ENCODE measurements at regions of chr1 and their contacts with region 1.

Region 1: GRCh38 chr1:111481387-111482221 is 7.8 kb downstream of the C1orf162 start:
- DNase-seq: peak; percentile 64
- H3K4me3 Mint-ChIP-seq: no peak overlapping the region
- H3K27ac Mint-ChIP-seq: no peak overlapping the region
- H3K4me1 Mint-ChIP-seq: no peaks in the 10 kb centered on the region
- H3K27me3 Mint-ChIP-seq: no peaks in the 10 kb centered on the region
- CTCF ChIP-seq: peak; percentile 58

Region 2: DNA sequence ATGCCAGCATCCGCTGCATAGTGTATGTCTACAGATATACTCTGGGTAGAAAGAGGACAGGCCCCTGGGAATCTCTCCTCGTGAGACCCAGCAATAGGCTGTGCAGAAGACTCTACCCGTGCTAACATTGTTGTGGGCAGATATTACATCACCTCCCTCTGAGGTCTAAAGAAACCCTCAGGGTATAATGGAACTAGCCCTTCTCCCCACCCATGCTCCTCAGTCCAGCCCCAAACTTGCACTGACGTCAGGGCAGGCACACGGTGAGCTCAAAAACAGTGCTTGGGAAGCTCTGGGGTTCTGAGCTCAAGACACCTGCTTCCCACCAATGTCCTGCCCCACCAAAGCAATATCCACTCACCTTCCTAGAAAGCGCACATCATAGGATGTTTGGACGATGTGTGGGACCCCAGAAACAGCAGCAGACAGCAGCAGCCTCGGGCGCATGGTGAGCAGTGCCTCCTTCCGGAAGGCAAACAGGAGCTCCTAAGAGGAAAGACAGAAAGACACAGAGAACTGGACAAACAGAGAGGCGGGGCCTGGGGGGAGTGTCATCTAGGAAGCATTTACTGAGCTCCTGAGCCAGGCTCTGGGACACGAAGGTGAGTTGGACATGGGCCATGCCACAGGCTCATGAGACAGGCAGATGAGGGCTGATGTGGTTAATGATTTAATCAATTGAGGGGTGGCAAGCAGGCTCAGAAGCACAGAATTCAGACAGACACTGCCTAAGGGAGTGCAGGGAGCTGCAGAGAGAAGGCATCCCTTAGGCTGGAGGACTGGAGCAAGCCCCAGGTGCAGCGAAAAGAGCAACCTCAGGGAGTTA is 58.8 kb before region 1 on chr1:
- CTCF ChIA-PET with region 1: no interaction called
- POLR2A ChIA-PET with region 1: no interaction called
- intact Hi-C with region 1: no loop called
- DNase-seq: peak; percentile 81
- H3K4me3 Mint-ChIP-seq: peak overlapping the region; percentile 59
- H3K27ac Mint-ChIP-seq: peak overlapping the region; percentile 58
- H3K4me1 Mint-ChIP-seq: peaks cover 23% of the 10 kb centered on the region
- H3K27me3 Mint-ChIP-seq: no peaks in the 10 kb centered on the region
- CTCF ChIP-seq: no peak

Region 3: DNA sequence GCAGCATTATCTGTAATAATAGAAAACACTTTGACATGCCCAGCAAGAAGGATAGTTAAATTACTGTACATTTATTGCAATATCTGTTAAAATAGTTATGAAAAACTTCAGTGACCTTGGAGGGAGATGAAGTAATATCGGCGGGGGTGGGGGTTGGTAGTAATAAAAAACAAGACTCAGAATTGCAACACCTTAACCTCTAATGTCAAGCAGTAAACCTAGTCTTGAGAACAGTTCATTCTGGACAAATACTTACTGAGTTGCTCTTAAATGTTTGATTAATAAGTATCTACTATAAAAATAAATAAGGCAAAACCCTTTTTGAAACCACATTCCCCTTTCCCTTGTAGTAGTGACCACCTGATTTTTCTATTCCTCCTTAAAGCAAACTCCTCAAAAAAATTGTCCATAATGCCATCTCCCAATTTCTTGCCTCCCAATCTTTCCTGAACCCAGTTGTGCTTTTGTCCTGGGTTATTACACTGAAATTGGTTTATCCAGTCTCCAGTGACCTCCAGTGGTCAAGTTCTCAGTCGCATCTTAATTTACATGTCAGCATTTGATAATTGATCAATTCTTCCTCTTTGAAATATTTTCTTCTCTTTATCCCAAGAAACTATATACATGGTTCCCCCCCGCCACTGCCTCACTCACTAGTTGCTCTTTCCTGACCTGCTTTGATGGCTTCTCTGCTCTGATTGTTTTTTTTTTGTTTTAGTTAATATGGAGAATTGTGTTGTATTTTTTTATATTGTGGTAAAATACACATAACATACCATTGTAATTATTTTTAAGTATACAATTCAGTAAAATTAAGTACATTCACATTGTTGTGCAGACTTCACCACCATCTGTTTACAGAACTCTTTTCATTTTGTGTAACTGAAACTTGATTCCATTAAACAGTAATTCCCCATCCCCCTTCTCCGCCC is 174.7 kb after region 1 on chr1:
- CTCF ChIA-PET with region 1: no interaction called
- POLR2A ChIA-PET with region 1: no interaction called
- intact Hi-C with region 1: loop called (anchors 1 kb)
- DNase-seq: peak; percentile 63
- H3K4me3 Mint-ChIP-seq: no peak overlapping the region
- H3K27ac Mint-ChIP-seq: peak overlapping the region; percentile 3
- H3K4me1 Mint-ChIP-seq: peaks cover 9% of the 10 kb centered on the region
- H3K27me3 Mint-ChIP-seq: no peaks in the 10 kb centered on the region
- CTCF ChIP-seq: peak; percentile 57

Region 4: GRCh38 chr1:111709986-111710385 is 228.4 kb after region 1 on chr1:
- CTCF ChIA-PET with region 1: interaction called, 7 read pairs
- POLR2A ChIA-PET with region 1: no interaction called
- intact Hi-C with region 1: loop called (anchors 5 kb)
- DNase-seq: no peak
- H3K4me3 Mint-ChIP-seq: no peak overlapping the region
- H3K27ac Mint-ChIP-seq: no peak overlapping the region
- H3K4me1 Mint-ChIP-seq: peaks cover 8% of the 10 kb centered on the region
- H3K27me3 Mint-ChIP-seq: no peaks in the 10 kb centered on the region
- CTCF ChIP-seq: no peak

Region 5: GRCh38 chr1:111747282-111747734 is 265.7 kb after region 1 on chr1:
- CTCF ChIA-PET with region 1: interaction called, 8 read pairs
- POLR2A ChIA-PET with region 1: no interaction called
- intact Hi-C with region 1: loop called (anchors 2 kb)
- DNase-seq: peak; percentile 89
- H3K4me3 Mint-ChIP-seq: no peak overlapping the region
- H3K27ac Mint-ChIP-seq: no peak overlapping the region
- H3K4me1 Mint-ChIP-seq: no peaks in the 10 kb centered on the region
- H3K27me3 Mint-ChIP-seq: no peaks in the 10 kb centered on the region
- CTCF ChIP-seq: peak; percentile 61

Region 6: GRCh38 chr1:111755331-111756123 is 273.9 kb after region 1 on chr1 and contains the start of gene DDX20:
- CTCF ChIA-PET with region 1: interaction called, 5 read pairs
- POLR2A ChIA-PET with region 1: interaction called, 5 read pairs
- intact Hi-C with region 1: loop called (anchors 2 kb)
- DNase-seq: peak; percentile 96
- H3K4me3 Mint-ChIP-seq: peak within 1 kb of the TSS; percentile 95
- H3K27ac Mint-ChIP-seq: peak within 1 kb of the TSS; percentile 95
- H3K4me1 Mint-ChIP-seq: peaks cover 6% of the 10 kb centered on the region
- H3K27me3 Mint-ChIP-seq: no peaks in the 10 kb centered on the region
- CTCF ChIP-seq: peak; percentile 88
- total RNA-seq, gene DDX20: 14.8 and 16.8 TPM in 2 replicates